ENCODE measurements at regions of chr4 and their contacts with region 1.

Region 1: DNA sequence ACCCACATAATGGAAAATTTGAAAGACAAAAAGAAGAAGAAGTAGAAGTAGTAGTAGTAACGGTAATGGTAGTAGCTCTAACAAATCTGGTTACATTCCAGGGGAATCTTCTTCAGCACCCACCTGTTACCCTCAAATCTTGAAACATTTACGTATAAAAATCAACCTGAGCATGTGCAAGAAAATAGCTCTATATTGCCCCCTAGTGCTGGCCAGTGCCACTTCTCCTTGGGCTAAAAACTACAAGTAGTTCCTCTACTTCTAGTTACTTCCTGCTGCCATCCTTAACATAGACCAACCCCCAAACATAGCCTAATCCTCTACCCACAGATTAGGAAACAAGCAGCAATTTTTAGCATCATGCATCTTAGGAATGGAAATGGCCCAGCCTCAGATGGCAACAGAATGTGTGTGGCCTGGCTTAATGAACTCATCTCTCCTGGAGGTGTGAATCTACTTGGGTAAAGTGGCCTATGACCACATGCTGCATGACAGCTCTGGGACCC is 3.1 kb downstream of the PDGFC start:
- DNase-seq: peak in 7 of 10 donors; percentile 44 to 88 (median 53)

Region 2: DNA sequence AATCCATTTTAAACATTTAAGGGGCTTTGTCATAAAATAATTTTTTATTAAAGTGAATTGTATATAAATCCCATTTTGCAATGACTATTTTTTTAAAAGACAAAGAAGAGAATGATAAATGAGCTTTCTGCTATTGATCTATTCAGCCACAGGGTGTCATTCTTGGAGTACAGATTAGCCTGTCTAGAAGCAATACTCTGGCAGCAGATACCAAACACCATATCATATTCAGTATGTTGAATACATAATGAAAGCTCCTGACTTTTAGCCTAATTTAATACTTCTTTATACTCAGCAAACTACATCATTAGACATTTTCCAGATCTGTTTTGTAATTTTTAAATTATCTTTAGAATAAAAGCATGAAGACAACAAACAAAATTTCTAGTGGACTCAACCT is 493.2 kb before region 1 on chr4:
- intact Hi-C with region 1: loop called (anchors 5 kb)
- DNase-seq: no peak

Region 3: GRCh38 chr4:156594624-156595023 is 373.9 kb before region 1 on chr4:
- intact Hi-C with region 1: loop called (anchors 5 kb)
- DNase-seq: peak; percentile 13 to 91 (median 44)

Region 4: DNA sequence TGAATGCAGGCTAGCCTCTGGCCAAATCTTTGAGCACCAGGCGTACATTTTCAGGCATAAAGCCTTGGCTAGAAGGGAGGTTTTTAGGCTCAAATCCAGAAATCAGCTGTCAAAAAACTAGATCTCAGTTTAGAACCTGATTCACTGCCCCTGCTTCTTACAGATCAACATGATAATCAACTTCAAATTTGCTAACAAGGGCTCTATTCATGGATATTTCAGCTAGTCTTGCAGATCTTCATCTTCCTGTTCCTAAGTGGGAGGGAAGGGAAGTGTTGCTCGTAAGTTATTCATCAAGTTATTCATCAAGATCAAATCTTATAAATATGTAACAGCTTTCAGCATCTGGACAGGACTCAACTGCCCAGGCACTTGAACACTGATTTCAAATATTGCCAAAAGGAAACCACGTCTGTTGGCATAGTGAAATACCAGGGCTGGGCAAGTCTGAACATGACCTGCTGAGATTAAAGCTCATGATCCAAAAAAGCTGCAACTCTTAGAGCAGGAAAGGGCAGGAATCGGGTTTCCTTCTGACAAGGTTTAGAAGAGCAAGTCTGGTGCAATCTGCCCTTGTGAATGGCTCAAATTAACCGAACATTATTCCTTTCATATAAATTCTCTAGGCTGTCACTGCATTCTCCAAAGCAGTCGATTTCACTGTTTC is 197.2 kb before region 1 on chr4:
- intact Hi-C with region 1: loop called (anchors 10 kb)
- DNase-seq: no peak

Region 5: DNA sequence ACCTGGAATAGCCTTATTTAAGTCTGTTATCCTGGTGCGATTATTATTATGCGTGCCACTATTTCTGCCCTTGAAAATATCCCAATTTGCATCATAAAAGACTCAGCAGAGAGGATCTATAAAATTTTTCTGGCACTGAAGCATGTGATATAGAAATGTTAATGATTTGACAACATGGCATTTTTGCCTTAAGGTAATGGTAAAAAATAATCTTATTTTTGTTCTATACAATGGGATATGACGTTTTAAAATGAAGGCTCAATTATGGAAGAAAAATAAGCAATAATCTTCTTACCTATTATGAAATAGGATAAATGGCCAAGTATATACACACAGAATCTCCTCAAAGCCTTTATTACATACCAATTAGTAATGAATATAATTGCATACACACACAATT is 110.5 kb before region 1 on chr4:
- intact Hi-C with region 1: no loop called
- DNase-seq: no peak

Region 6: DNA sequence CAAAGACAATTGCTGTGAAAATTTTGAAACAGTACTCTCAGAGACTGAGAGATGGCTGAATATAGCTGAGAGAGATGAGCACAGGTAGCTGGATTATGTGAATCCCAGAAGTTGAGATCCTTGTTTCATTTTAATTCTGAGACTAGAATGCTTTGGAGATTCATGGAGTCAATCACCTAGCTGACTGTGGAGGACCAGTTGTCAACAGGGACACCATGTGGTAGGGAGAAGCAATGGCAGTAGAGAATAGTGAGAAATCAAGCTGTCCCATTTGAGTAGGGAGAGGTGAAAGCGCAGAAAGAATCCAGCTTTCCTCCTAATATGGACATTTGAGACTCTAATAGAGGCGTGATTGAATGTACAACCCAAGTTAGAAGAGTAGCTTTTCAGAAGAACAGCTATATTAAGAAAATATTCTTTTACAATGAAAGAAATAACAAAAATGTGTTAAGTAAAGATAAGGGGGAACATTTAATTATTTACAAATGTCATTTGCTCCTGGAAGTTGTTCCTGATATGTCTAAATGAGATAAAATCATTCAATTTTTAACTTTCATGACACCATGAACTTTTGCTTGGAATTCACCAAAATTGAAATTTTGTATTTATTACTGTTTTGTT is 77.1 kb after region 1 on chr4:
- intact Hi-C with region 1: loop called (anchors 10 kb)
- DNase-seq: peak in 1 of 10 donors; percentile 16

Measured in posterior cingulate gyrus (tissue), 11 donors.